HepG2 (cell line): ENCODE measurements at regions of chr1 and their contacts with region 1.

Region 1: GRCh38 chr1:88998716-88999115 is 6.3 kb upstream of the KYAT3 start:
- DNase-seq: peak; percentile 64
- ATAC-seq: peak; percentile 92
- H3K4me3 ChIP-seq: no peak overlapping the region
- H3K27ac ChIP-seq: no peak overlapping the region
- H3K4me1 ChIP-seq: peaks cover 6% of the 10 kb centered on the region
- H3K27me3 ChIP-seq: no peaks in the 10 kb centered on the region; a peak in 1 of 5 replicates
- CTCF ChIP-seq: peak; percentile 73
- EP300 ChIP-seq: no peak
- POLR2A ChIP-seq: no peak
- RAD21 ChIP-seq: peak; percentile 63

Region 2: GRCh38 chr1:88825721-88826120 is 173.0 kb before region 1 on chr1:
- CTCF ChIA-PET with region 1: no interaction called
- POLR2A ChIA-PET with region 1: no interaction called
- in situ Hi-C with region 1: no loop called
- intact Hi-C with region 1: no loop called
- DNase-seq: no peak
- ATAC-seq: no peak
- H3K4me3 ChIP-seq: no peak overlapping the region
- H3K27ac ChIP-seq: no peak overlapping the region
- H3K4me1 ChIP-seq: no peaks in the 10 kb centered on the region
- H3K27me3 ChIP-seq: no peaks in the 10 kb centered on the region
- CTCF ChIP-seq: no peak
- EP300 ChIP-seq: no peak
- POLR2A ChIP-seq: no peak
- RAD21 ChIP-seq: no peak

Region 3: GRCh38 chr1:89047734-89048133 is 49.0 kb after region 1 on chr1:
- CTCF ChIA-PET with region 1: no interaction called
- POLR2A ChIA-PET with region 1: no interaction called
- in situ Hi-C with region 1: no loop called
- intact Hi-C with region 1: no loop called
- DNase-seq: no peak
- ATAC-seq: no peak
- H3K4me3 ChIP-seq: no peak overlapping the region
- H3K27ac ChIP-seq: no peak overlapping the region
- H3K4me1 ChIP-seq: peaks cover 36% of the 10 kb centered on the region
- H3K27me3 ChIP-seq: no peaks in the 10 kb centered on the region
- CTCF ChIP-seq: no peak
- EP300 ChIP-seq: no peak
- POLR2A ChIP-seq: no peak
- RAD21 ChIP-seq: no peak

Region 4: DNA sequence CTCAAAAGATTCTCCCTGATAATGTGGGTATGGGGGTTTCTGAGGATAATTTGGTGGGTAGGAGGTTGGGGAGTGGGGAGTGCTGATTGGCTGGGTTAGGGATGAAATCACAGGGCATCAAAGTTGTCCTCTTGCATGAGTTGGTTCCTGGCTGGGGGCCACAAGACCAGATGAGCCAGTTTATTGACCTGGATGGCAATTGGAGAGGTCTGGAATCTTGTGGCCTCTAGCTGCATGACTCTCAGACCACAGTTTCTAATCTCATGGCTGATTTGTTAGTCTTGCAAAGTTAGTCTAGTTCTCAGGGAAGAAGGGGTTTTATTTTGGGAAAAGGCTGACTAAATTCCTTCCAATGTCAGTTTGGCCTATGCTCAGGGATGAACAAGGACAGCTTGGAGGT is 69.6 kb after region 1 on chr1:
- CTCF ChIA-PET with region 1: no interaction called
- POLR2A ChIA-PET with region 1: no interaction called
- in situ Hi-C with region 1: no loop called
- intact Hi-C with region 1: loop called (anchors 2 kb)
- DNase-seq: no peak
- ATAC-seq: no peak
- H3K4me3 ChIP-seq: no peak overlapping the region
- H3K27ac ChIP-seq: no peak overlapping the region
- H3K4me1 ChIP-seq: peaks cover 30% of the 10 kb centered on the region
- H3K27me3 ChIP-seq: no peaks in the 10 kb centered on the region
- CTCF ChIP-seq: no peak
- EP300 ChIP-seq: no peak
- POLR2A ChIP-seq: no peak
- RAD21 ChIP-seq: no peak

Region 5: DNA sequence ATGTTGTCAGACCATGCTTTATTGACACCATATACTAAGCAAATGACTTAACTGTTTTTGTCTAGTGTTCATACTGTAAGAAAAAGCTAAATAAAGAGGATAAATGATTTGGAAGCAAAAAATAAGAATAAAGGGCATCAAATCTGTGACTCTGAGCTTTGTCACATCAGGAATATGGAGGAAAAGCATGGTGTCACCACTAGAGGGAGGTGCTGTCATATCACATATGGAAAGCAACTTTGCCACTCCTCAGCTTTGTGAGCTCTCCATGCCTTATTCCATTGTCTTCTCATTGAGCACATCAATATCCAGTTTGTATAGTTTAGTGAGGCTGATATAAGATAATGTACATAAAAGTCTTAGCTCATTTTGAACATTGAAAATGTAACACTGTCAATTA is 87.1 kb after region 1 on chr1:
- CTCF ChIA-PET with region 1: no interaction called
- POLR2A ChIA-PET with region 1: no interaction called
- in situ Hi-C with region 1: no loop called
- intact Hi-C with region 1: loop called (anchors 1 kb)
- DNase-seq: peak; percentile 52
- ATAC-seq: peak; percentile 78
- H3K4me3 ChIP-seq: no peak overlapping the region
- H3K27ac ChIP-seq: no peak overlapping the region
- H3K4me1 ChIP-seq: peaks cover 8% of the 10 kb centered on the region; the same call in 1 of the 2 replicates
- H3K27me3 ChIP-seq: no peaks in the 10 kb centered on the region
- CTCF ChIP-seq: peak; percentile 78
- EP300 ChIP-seq: no peak
- POLR2A ChIP-seq: no peak
- RAD21 ChIP-seq: peak; percentile 73

Region 6: DNA sequence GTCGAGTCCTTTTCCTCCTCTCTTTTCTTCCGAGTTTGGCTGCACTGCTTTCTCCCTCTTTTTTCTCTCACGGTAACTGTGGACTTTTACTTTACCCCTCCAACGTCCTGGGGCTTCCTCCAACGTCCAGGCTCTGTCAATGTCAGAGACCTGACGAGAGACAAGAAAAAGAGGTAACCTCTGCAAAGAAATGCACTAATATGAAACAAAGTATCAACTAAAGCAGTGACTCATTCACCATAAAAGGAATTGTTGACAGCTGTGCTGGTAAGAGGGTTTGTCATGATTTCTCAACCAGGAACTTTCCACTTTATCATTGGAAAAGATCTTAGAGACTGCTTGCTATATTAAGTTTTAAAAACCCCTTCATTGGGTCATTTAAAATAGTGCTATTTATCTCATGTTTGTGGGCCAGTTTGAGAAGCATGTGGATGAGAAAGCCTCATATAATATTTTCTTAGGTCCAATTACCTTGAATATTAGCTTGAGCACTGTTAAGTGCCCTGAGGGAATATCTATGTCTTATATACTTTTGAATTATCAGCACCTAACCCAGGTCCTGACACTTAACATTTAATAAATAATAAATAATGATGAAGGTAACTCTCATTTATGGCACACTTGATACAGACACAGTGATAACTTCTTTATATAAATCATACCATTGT is 127.3 kb after region 1 on chr1 and contains the start of gene GBP2:
- CTCF ChIA-PET with region 1: no interaction called
- POLR2A ChIA-PET with region 1: no interaction called
- in situ Hi-C with region 1: no loop called
- intact Hi-C with region 1: loop called (anchors 1 kb)
- DNase-seq: peak; percentile 66
- ATAC-seq: peak; percentile 87
- H3K4me3 ChIP-seq: peak within 1 kb of the TSS; percentile 51 to 61 (median 52)
- H3K27ac ChIP-seq: peak within 1 kb of the TSS; percentile 47
- H3K4me1 ChIP-seq: peaks cover 27% of the 10 kb centered on the region
- H3K27me3 ChIP-seq: no peaks in the 10 kb centered on the region
- CTCF ChIP-seq: no peak
- EP300 ChIP-seq: no peak
- POLR2A ChIP-seq: no peak
- RAD21 ChIP-seq: no peak
- total RNA-seq, gene GBP2: 5.1 and 6.6 TPM in 2 replicates

Region 7: GRCh38 chr1:89149229-89149628 is 150.5 kb after region 1 on chr1:
- CTCF ChIA-PET with region 1: interaction called, 7 read pairs
- POLR2A ChIA-PET with region 1: no interaction called
- in situ Hi-C with region 1: no loop called
- intact Hi-C with region 1: loop called (anchors 1 kb)
- DNase-seq: peak; percentile 36
- ATAC-seq: peak; percentile 99
- H3K4me3 ChIP-seq: no peak overlapping the region
- H3K27ac ChIP-seq: no peak overlapping the region
- H3K4me1 ChIP-seq: no peaks in the 10 kb centered on the region
- H3K27me3 ChIP-seq: no peaks in the 10 kb centered on the region
- CTCF ChIP-seq: peak; percentile 69
- EP300 ChIP-seq: no peak
- POLR2A ChIP-seq: no peak
- RAD21 ChIP-seq: no peak

Region 8: GRCh38 chr1:89358287-89358893 is 359.7 kb after region 1 on chr1:
- CTCF ChIA-PET with region 1: interaction called, 14 read pairs
- POLR2A ChIA-PET with region 1: no interaction called
- in situ Hi-C with region 1: no loop called
- intact Hi-C with region 1: loop called (anchors 1 kb)
- DNase-seq: peak; percentile 64
- ATAC-seq: peak; percentile 81
- H3K4me3 ChIP-seq: no peak overlapping the region
- H3K27ac ChIP-seq: no peak overlapping the region
- H3K4me1 ChIP-seq: peaks cover 27% of the 10 kb centered on the region
- H3K27me3 ChIP-seq: peaks cover 0 to 21% of the 10 kb centered on the region in 2 experiments; a peak in 3 of 5 replicates
- CTCF ChIP-seq: peak; percentile 85
- EP300 ChIP-seq: no peak
- POLR2A ChIP-seq: no peak
- RAD21 ChIP-seq: peak; percentile 31; the same call in 1 of the 2 replicates

Region 9: GRCh38 chr1:89454845-89455521 is 456.3 kb after region 1 on chr1:
- CTCF ChIA-PET with region 1: interaction called, 9 read pairs
- POLR2A ChIA-PET with region 1: no interaction called
- in situ Hi-C with region 1: loop called (anchors 25 kb)
- intact Hi-C with region 1: loop called (anchors 1 kb)
- DNase-seq: peak; percentile 23
- ATAC-seq: peak; percentile 87
- H3K4me3 ChIP-seq: no peak overlapping the region
- H3K27ac ChIP-seq: no peak overlapping the region
- H3K4me1 ChIP-seq: no peaks in the 10 kb centered on the region
- H3K27me3 ChIP-seq: no peaks in the 10 kb centered on the region
- CTCF ChIP-seq: peak; percentile 68
- EP300 ChIP-seq: no peak
- POLR2A ChIP-seq: no peak
- RAD21 ChIP-seq: no peak